Activated naive CD4-positive, alpha-beta T cell treated with anti-CD3 and anti-CD28 coated beads for 36 hours (primary cell): ENCODE measurements at regions of chr11 and their contacts with region 1.

Region 1: DNA sequence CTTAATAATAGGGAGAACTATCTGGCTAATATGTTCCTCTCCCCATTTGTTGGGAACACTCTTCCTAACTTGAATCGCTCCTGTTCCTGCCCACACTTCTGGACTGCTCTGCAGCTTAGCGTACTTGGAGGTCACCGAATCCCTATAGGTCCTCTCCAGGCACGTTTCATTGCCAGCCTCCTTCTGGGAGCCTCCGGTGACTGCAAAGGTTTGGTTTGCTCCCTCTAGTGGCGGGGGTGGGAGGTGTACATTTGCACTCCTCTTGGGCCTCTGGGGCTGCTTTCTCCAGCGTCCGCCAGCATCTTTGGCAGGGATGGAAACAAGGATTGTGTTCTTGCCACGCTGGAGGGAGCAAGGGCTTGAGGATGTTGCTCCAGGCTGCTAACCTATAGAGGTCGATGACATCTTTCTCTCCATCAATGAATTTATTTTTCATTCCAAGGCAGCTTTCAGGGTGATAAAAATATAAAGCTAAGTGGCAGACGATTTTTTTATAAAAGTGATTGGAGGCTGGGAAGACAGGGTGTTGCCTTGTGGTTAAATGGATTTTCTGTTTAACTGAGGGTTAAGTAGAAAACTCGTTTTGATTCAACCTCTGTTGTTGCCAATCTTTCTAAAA is 48.7 kb downstream of the TSPAN18 start:
- DNase-seq: peak; percentile 82
- H3K4me3 Mint-ChIP-seq: no peak overlapping the region
- H3K27ac Mint-ChIP-seq: no peak overlapping the region
- H3K4me1 Mint-ChIP-seq: peaks cover 7% of the 10 kb centered on the region
- H3K27me3 Mint-ChIP-seq: no peaks in the 10 kb centered on the region

Region 2: GRCh38 chr11:44658506-44658850 is 117.0 kb before region 1 on chr11:
- CTCF ChIA-PET with region 1: interaction called, 4 read pairs
- intact Hi-C with region 1: loop called (anchors 2 kb)
- DNase-seq: peak; percentile 65
- H3K4me3 Mint-ChIP-seq: no peak overlapping the region
- H3K27ac Mint-ChIP-seq: no peak overlapping the region
- H3K4me1 Mint-ChIP-seq: peaks cover 17% of the 10 kb centered on the region
- H3K27me3 Mint-ChIP-seq: no peaks in the 10 kb centered on the region

Region 3: GRCh38 chr11:44747316-44747715 is 28.2 kb before region 1 on chr11:
- CTCF ChIA-PET with region 1: interaction called, 13 read pairs
- intact Hi-C with region 1: no loop called
- DNase-seq: peak; percentile 20
- H3K4me3 Mint-ChIP-seq: no peak overlapping the region
- H3K27ac Mint-ChIP-seq: peak overlapping the region; percentile 62
- H3K4me1 Mint-ChIP-seq: peaks cover 50% of the 10 kb centered on the region
- H3K27me3 Mint-ChIP-seq: no peaks in the 10 kb centered on the region

Region 4: GRCh38 chr11:44893846-44894617 is 118.6 kb after region 1 on chr11:
- CTCF ChIA-PET with region 1: interaction called, 4 read pairs
- intact Hi-C with region 1: loop called (anchors 5 kb)
- DNase-seq: peak; percentile 73
- H3K4me3 Mint-ChIP-seq: no peak overlapping the region
- H3K27ac Mint-ChIP-seq: no peak overlapping the region
- H3K4me1 Mint-ChIP-seq: no peaks in the 10 kb centered on the region
- H3K27me3 Mint-ChIP-seq: no peaks in the 10 kb centered on the region

Region 5: DNA sequence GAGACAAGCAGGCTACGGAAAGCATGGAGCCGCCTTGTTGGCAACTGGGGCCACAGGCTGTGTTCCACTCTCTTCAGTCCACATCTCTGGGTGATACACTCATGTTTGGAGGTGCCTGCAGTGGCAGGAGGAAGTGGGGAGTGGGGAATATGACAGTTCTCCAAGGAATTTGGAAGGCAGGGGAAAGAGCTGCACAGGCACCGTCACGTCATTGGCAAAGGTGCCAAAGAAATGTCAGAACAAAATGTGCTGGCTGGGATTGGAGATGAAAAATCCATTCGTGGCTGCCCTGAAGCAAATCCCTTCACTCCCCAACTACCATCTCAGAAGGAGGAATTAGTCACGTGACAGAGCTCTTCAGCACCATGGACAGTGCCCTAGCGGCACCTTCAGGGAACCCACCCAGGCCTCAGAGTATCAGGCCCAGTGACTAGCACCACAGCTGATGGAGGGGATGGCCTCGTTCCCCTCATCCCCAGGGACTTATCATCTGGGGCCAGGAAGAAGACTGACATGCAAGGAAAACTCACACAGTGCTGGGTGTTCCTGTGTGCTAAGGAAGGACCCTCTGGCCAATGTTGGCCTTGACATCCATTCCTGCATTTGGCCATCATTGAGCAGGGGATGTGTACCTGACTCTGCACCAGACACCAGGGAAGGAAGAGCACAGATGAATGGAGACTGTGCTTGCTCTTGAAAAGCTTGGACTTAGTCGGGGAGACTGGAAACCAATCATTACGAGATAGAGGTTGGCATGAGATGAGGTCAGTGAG is 322.4 kb after region 1 on chr11:
- CTCF ChIA-PET with region 1: no interaction called
- intact Hi-C with region 1: no loop called
- DNase-seq: peak; percentile 65
- H3K4me3 Mint-ChIP-seq: no peak overlapping the region
- H3K27ac Mint-ChIP-seq: no peak overlapping the region
- H3K4me1 Mint-ChIP-seq: peaks cover 13% of the 10 kb centered on the region
- H3K27me3 Mint-ChIP-seq: peaks cover 15% of the 10 kb centered on the region